Naive thymus-derived CD4-positive, alpha-beta T cell (primary cell): ENCODE measurements at regions of chr20 and their contacts with region 1.

Region 1: GRCh38 chr20:4961746-4962145 is 39.6 kb downstream of the SLC23A2 start:
- DNase-seq: peak in 7 of 9 donors; percentile 21 to 48 (median 30)
- ATAC-seq: peak; percentile 89
- H3K4me3 ChIP-seq: no peak overlapping the region
- H3K4me3 Mint-ChIP-seq: peak overlapping the region in 9 of 10 donors; percentile 30 to 83 (median 61)
- H3K27ac ChIP-seq: peak overlapping the region; percentile 47
- H3K27ac Mint-ChIP-seq: peak overlapping the region; percentile 87 to 97 (median 90)
- H3K4me1 ChIP-seq: peaks cover 15 to 16% of the 10 kb centered on the region in 2 donors
- H3K4me1 Mint-ChIP-seq: peaks cover 13 to 29% (median 24%) of the 10 kb centered on the region in 7 donors
- H3K27me3 ChIP-seq: no peaks in the 10 kb centered on the region
- H3K27me3 Mint-ChIP-seq: no peaks in the 10 kb centered on the region

Region 2: GRCh38 chr20:4973330-4974097 is 11.8 kb after region 1 on chr20:
- CTCF ChIA-PET with region 1: no interaction called
- POLR2A ChIA-PET with region 1: interaction called, 4 read pairs
- intact Hi-C with region 1: loop called in 1 of 2 experiments (anchors 1 kb)
- DNase-seq: peak in 5 of 9 donors; percentile 8 to 63 (median 19)
- ATAC-seq: peak; percentile 61
- H3K4me3 ChIP-seq: peak overlapping the region; percentile 1
- H3K4me3 Mint-ChIP-seq: peak overlapping the region; percentile 45 to 83 (median 66)
- H3K27ac ChIP-seq: peak overlapping the region; percentile 23
- H3K27ac Mint-ChIP-seq: peak overlapping the region; percentile 53 to 92 (median 71)
- H3K4me1 ChIP-seq: peaks cover 0 to 5% of the 10 kb centered on the region in 2 donors
- H3K4me1 Mint-ChIP-seq: peaks cover 14 to 47% (median 37%) of the 10 kb centered on the region in 7 donors
- H3K27me3 ChIP-seq: no peaks in the 10 kb centered on the region
- H3K27me3 Mint-ChIP-seq: no peaks in the 10 kb centered on the region

Region 3: GRCh38 chr20:5046656-5047339 is 85.1 kb after region 1 on chr20:
- CTCF ChIA-PET with region 1: no interaction called
- POLR2A ChIA-PET with region 1: no interaction called
- intact Hi-C with region 1: no loop called
- DNase-seq: no peak
- ATAC-seq: peak; percentile 54
- H3K4me3 ChIP-seq: no peak overlapping the region
- H3K4me3 Mint-ChIP-seq: no peak overlapping the region
- H3K27ac ChIP-seq: no peak overlapping the region
- H3K27ac Mint-ChIP-seq: no peak overlapping the region
- H3K4me1 ChIP-seq: no peaks in the 10 kb centered on the region
- H3K4me1 Mint-ChIP-seq: peaks cover 0 to 4% (median 0%) of the 10 kb centered on the region in 7 donors
- H3K27me3 ChIP-seq: no peaks in the 10 kb centered on the region
- H3K27me3 Mint-ChIP-seq: peaks cover 0 to 28% (median 0%) of the 10 kb centered on the region in 5 donors